ENCODE measurements at regions of chr2 and their contacts with region 1.

Region 1: DNA sequence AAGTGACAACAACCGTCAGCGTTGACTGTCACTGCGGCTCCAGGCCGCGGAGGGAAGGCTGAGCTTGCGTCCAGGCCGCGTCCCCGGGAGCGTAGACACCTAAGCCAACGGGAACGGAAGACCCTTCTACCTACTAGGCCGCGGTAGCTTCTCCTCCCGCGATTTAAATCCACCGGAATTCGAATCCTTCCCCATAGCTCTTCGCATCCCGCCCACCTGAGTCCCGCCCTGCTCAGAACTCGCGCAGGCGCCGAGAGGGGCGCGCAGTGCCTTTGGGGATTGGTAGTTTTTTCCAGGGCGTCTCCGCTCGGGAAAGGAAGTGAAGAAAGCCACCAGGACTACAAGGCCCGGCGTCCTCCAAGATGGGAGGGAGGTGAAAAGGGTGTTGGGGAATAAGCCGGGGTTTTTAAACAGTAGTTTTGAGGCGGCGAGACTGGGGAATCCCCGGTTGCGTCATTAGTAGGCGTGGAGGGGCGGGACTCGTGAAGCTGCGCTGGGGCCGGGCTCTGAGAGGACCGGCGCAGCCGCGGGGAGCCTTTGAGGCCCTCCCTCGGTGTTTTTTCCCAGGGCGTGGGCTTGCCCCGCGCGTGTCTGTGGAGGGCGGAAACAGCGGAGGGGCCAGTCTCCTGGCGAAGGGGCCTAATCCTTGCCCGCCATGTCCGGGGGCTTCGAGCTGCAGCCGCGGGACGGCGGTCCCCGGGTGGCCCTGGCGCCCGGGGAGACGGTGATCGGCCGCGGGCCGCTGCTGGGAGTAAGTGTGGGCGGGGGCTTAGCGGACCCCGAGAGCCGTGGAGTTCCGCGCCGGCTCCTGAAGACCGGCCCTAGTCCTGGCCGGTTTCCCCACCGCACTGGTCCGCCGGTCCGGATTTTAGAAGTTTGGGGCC is at the starts of genes APLF and FBXO48:
- DNase-seq: peak; percentile 97
- H3K4me3 Mint-ChIP-seq: peak within 1 kb of the TSS; percentile 97
- H3K27ac Mint-ChIP-seq: peak within 1 kb of the TSS; percentile 91
- H3K4me1 Mint-ChIP-seq: peaks cover 48% of the 10 kb centered on the region
- H3K27me3 Mint-ChIP-seq: no peaks in the 10 kb centered on the region
- total RNA-seq, gene APLF: 2.3 and 3.0 TPM in 2 replicates
- total RNA-seq, gene FBXO48: 1.3 and 1.4 TPM in 2 replicates

Region 2: DNA sequence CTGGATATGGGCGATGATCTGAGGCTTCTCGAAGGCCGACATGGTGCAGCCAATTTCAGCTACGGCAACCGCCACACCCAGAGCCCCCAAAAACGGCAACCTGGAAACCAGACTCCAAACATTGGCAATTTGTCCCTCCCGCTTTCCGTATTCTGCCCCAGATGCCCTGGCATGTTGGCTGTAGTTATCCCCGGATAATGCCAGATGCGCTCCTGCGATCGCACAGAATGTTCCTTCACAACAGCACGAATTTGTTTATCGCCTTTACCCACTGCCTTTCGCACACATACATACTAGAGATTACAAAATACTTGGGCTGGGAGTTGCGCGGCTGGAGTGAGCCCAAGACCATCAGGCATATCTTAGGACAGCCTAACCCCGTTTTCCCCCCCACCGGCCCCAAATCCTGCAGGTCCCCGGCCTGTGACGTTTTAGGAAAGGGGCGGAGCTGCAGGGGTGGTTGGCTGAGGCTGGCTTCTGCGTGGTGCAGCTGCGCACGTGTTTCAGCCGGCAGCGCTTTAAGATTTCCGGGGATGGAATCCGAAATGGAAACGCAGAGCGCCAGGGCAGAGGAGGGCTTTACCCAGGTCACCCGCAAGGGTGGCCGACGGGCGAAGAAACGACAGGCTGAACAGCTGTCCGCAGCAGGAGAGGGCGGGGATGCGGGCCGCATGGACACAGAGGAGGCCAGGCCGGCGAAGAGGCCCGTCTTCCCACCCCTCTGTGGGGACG is 309.8 kb before region 1 on chr2 and contains the start of gene PNO1:
- intact Hi-C with region 1: loop called (anchors 1 kb)
- DNase-seq: peak; percentile 96
- H3K4me3 Mint-ChIP-seq: peak within 1 kb of the TSS; percentile 90
- H3K27ac Mint-ChIP-seq: peak within 1 kb of the TSS; percentile 100
- H3K4me1 Mint-ChIP-seq: peaks cover 37% of the 10 kb centered on the region
- H3K27me3 Mint-ChIP-seq: no peaks in the 10 kb centered on the region
- total RNA-seq, gene PNO1: 31.3 and 33.4 TPM in 2 replicates

Region 3: GRCh38 chr2:68282811-68283418 is 184.4 kb before region 1 on chr2:
- intact Hi-C with region 1: no loop called
- DNase-seq: no peak
- H3K4me3 Mint-ChIP-seq: no peak overlapping the region
- H3K27ac Mint-ChIP-seq: no peak overlapping the region
- H3K4me1 Mint-ChIP-seq: no peaks in the 10 kb centered on the region
- H3K27me3 Mint-ChIP-seq: peaks cover 45% of the 10 kb centered on the region

Region 4: DNA sequence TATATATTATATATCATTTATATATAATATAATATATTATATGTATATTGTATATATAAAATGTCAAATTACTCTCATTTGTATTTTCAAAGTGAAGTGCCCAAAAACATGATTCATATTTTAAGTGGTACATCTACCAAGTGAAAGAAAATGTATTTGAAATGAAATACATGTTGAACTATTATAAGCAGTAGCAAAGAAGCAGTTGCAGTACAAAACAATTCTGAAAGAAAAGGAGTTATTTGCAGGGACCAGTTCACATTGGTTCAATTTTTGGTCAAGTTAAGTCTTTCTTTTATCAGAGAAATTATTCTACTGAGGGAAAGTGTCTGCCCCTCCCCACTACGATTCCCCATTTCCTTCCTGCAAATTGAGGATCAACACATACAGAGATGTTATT is 51.9 kb after region 1 on chr2:
- intact Hi-C with region 1: loop called (anchors 2 kb)
- DNase-seq: no peak
- H3K4me3 Mint-ChIP-seq: no peak overlapping the region
- H3K27ac Mint-ChIP-seq: no peak overlapping the region
- H3K4me1 Mint-ChIP-seq: peaks cover 24% of the 10 kb centered on the region
- H3K27me3 Mint-ChIP-seq: no peaks in the 10 kb centered on the region

Region 5: GRCh38 chr2:68715353-68716041 is 248.2 kb after region 1 on chr2:
- intact Hi-C with region 1: loop called (anchors 1 kb)
- DNase-seq: no peak
- H3K4me3 Mint-ChIP-seq: peak overlapping the region; percentile 47
- H3K27ac Mint-ChIP-seq: peak overlapping the region; percentile 59
- H3K4me1 Mint-ChIP-seq: peaks cover 82% of the 10 kb centered on the region
- H3K27me3 Mint-ChIP-seq: peaks cover 4% of the 10 kb centered on the region

Region 6: GRCh38 chr2:68837861-68838341 is 370.6 kb after region 1 on chr2:
- intact Hi-C with region 1: loop called (anchors 1 kb)
- DNase-seq: no peak
- H3K4me3 Mint-ChIP-seq: no peak overlapping the region
- H3K27ac Mint-ChIP-seq: peak overlapping the region; percentile 83
- H3K4me1 Mint-ChIP-seq: peaks cover 39% of the 10 kb centered on the region
- H3K27me3 Mint-ChIP-seq: peaks cover 4% of the 10 kb centered on the region

Region 7: DNA sequence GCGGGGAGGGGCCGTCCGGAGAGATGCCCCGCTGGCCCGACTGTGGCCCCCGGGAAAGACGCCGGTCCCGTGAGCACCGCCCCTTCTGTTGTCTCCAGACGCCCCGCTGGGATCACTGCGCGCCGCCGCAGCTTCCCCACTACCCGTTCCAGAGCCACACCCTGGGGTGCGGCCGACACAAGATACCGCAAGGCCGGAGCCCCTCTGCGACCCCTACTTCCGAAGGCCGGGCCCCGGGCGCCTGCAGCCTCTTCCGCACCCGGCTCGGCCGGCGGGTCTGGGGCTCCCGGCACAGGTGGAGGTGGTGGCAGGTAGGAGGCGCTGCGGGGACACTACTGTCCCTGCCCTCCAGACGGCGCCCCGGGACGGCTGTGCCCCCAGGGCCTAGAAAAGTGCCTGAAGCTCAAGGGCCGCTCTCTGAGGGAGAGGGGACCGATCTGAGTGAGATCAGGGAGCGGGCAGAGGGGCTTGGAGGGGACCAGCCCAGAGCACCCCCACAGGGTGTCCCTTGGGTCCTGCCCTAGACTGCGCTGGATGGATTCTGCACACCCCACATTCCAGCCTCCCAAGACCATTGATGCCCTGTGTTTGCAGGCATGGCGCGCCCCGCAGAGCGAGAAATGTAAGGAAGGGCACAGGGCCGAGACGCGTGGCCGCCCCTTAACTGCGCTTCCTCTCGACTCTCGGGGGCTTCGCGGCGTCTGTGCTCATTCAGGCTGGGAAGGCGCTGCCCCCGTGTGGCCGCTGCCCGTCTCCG is 839.7 kb after region 1 on chr2:
- intact Hi-C with region 1: loop called (anchors 1 kb)
- DNase-seq: peak; percentile 45
- H3K4me3 Mint-ChIP-seq: peak overlapping the region; percentile 59
- H3K27ac Mint-ChIP-seq: no peak overlapping the region
- H3K4me1 Mint-ChIP-seq: peaks cover 10% of the 10 kb centered on the region
- H3K27me3 Mint-ChIP-seq: peaks cover 37% of the 10 kb centered on the region